ENCODE measurements at regions of chr12 and their contacts with region 1.

Region 1: GRCh38 chr12:39619660-39620433 is at the start of gene ABCD2:
- DNase-seq: peak; percentile 87
- H3K4me3 ChIP-seq: peak within 1 kb of the TSS; percentile 74
- H3K27ac ChIP-seq: peak within 1 kb of the TSS; percentile 87
- H3K4me1 ChIP-seq: peaks cover 51% of the 10 kb centered on the region
- CTCF ChIP-seq: peak; percentile 55
- total RNA-seq, gene ABCD2: 1.2 and 1.5 TPM in 2 replicates

Region 2: DNA sequence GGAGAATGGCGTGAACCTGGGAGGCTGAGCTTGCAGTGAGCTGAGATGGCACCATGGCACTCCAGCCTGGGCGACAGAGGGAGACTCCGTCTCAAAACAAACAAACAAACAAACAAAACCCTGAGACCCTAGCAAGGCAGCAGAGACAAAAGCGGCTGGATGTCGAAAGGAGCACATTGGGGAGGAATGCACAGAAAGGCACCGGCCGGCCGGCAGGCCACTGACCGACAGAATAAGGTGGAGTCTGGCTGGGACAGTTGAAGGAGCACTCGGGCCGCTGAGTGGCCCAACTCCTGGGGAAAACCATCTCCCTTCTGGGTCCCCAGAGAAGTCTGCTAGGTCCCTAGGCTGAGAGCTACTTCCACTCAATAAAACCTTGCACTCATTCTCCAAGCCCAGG is 433.1 kb before region 1 on chr12:
- CTCF ChIA-PET with region 1: no interaction called
- POLR2A ChIA-PET with region 1: no interaction called
- intact Hi-C with region 1: no loop called
- DNase-seq: no peak
- H3K4me3 ChIP-seq: no peak overlapping the region
- H3K27ac ChIP-seq: no peak overlapping the region
- H3K4me1 ChIP-seq: no peaks in the 10 kb centered on the region
- CTCF ChIP-seq: no peak

Region 3: GRCh38 chr12:39553471-39553870 is 66.4 kb before region 1 on chr12:
- CTCF ChIA-PET with region 1: no interaction called
- POLR2A ChIA-PET with region 1: no interaction called
- intact Hi-C with region 1: no loop called
- DNase-seq: no peak
- H3K4me3 ChIP-seq: no peak overlapping the region
- H3K27ac ChIP-seq: no peak overlapping the region
- H3K4me1 ChIP-seq: no peaks in the 10 kb centered on the region
- CTCF ChIP-seq: no peak

Region 4: GRCh38 chr12:39605501-39605900 is 14.3 kb before region 1 on chr12:
- CTCF ChIA-PET with region 1: no interaction called
- POLR2A ChIA-PET with region 1: interaction called, 10 read pairs
- intact Hi-C with region 1: no loop called
- DNase-seq: no peak
- H3K4me3 ChIP-seq: no peak overlapping the region
- H3K27ac ChIP-seq: no peak overlapping the region
- H3K4me1 ChIP-seq: no peaks in the 10 kb centered on the region
- CTCF ChIP-seq: no peak

Region 5: GRCh38 chr12:39692258-39692853 is 72.5 kb after region 1 on chr12:
- CTCF ChIA-PET with region 1: no interaction called
- POLR2A ChIA-PET with region 1: no interaction called
- intact Hi-C with region 1: no loop called
- DNase-seq: peak; percentile 29
- H3K4me3 ChIP-seq: no peak overlapping the region
- H3K27ac ChIP-seq: no peak overlapping the region
- H3K4me1 ChIP-seq: no peaks in the 10 kb centered on the region
- CTCF ChIP-seq: peak; percentile 74

Measured in OCI-LY7 (cell line).